AG04450 (cell line): ENCODE measurements at regions of chr1 and their contacts with region 1.

Region 1: GRCh38 chr1:206912445-206913095 is 9.2 kb downstream of the FCMR start:
- DNase-seq: peak; percentile 55
- H3K4me3 ChIP-seq: no peak overlapping the region
- H3K27ac ChIP-seq: no peak overlapping the region
- H3K27me3 ChIP-seq: peaks cover 14% of the 10 kb centered on the region
- CTCF ChIP-seq: peak; percentile 80

Region 2: GRCh38 chr1:206663832-206664652 is 248.5 kb before region 1 on chr1:
- CTCF ChIA-PET with region 1: interaction called, 47 read pairs
- POLR2A ChIA-PET with region 1: no interaction called
- DNase-seq: peak; percentile 29
- H3K4me3 ChIP-seq: peak overlapping the region; percentile 31; the same call in 1 of the 2 replicates
- H3K27ac ChIP-seq: no peak overlapping the region
- H3K27me3 ChIP-seq: peaks cover 14% of the 10 kb centered on the region
- CTCF ChIP-seq: peak; percentile 82

Region 3: GRCh38 chr1:206725109-206725963 is 187.2 kb before region 1 on chr1:
- CTCF ChIA-PET with region 1: interaction called, 58 read pairs
- POLR2A ChIA-PET with region 1: interaction called, 3 read pairs
- DNase-seq: no peak
- H3K4me3 ChIP-seq: no peak overlapping the region
- H3K27ac ChIP-seq: no peak overlapping the region
- H3K27me3 ChIP-seq: no peaks in the 10 kb centered on the region
- CTCF ChIP-seq: peak; percentile 75

Region 4: GRCh38 chr1:206808615-206809014 is 104.0 kb before region 1 on chr1:
- CTCF ChIA-PET with region 1: interaction called, 107 read pairs
- POLR2A ChIA-PET with region 1: no interaction called
- DNase-seq: no peak
- H3K4me3 ChIP-seq: no peak overlapping the region
- H3K27ac ChIP-seq: no peak overlapping the region
- H3K27me3 ChIP-seq: no peaks in the 10 kb centered on the region
- CTCF ChIP-seq: peak; percentile 66

Region 5: GRCh38 chr1:206865013-206865671 is 47.4 kb before region 1 on chr1 and contains the start of gene IL20:
- CTCF ChIA-PET with region 1: interaction called, 46 read pairs
- POLR2A ChIA-PET with region 1: no interaction called
- DNase-seq: peak; percentile 50
- H3K4me3 ChIP-seq: no peak within 1 kb of the TSS
- H3K27ac ChIP-seq: no peak within 1 kb of the TSS
- H3K27me3 ChIP-seq: no peaks in the 10 kb centered on the region
- CTCF ChIP-seq: peak; percentile 90
- polyA plus RNA-seq, gene IL20: not detected in 2 replicates

Region 6: DNA sequence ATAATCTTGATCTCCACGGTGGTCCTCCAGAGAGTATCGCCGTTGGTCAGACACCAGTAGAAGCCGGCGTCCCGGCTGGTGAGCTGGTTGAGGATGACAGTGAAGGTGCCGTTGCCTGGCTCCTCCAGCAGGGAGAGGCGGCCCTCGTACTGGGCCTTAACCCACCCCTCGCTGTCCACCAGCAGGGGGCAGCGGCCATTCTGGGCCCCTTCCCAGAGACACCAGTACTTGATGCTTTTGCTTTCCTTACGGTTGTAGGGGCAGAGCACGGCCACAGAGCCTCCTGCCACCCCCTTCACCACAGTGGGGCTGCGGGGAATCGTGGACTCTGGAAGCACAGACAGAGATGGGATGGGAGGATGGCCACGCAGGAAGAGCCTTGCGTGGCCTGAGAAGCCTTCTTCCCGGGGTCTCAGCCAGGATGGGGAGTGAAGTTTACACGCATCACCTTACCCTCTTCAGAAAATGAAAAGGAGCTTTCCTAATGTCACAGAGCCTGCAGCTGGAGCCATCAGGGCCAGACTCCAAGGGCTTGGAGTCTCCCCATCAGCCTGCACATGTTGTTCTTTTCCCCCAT is 23.0 kb after region 1 on chr1:
- CTCF ChIA-PET with region 1: interaction called, 13 read pairs
- POLR2A ChIA-PET with region 1: no interaction called
- DNase-seq: peak; percentile 2
- H3K4me3 ChIP-seq: no peak overlapping the region
- H3K27ac ChIP-seq: no peak overlapping the region
- H3K27me3 ChIP-seq: peaks cover 22% of the 10 kb centered on the region
- CTCF ChIP-seq: peak; percentile 58